Right ventricle myocardium superior (tissue), 1 donor: ENCODE measurements at regions of chr6 and their contacts with region 1.

Region 1: GRCh38 chr6:3751730-3752542 is 423 bp upstream of the PXDC1 start:
- DNase-seq: peak; percentile 93
- ATAC-seq: peak; percentile 82

Region 2: DNA sequence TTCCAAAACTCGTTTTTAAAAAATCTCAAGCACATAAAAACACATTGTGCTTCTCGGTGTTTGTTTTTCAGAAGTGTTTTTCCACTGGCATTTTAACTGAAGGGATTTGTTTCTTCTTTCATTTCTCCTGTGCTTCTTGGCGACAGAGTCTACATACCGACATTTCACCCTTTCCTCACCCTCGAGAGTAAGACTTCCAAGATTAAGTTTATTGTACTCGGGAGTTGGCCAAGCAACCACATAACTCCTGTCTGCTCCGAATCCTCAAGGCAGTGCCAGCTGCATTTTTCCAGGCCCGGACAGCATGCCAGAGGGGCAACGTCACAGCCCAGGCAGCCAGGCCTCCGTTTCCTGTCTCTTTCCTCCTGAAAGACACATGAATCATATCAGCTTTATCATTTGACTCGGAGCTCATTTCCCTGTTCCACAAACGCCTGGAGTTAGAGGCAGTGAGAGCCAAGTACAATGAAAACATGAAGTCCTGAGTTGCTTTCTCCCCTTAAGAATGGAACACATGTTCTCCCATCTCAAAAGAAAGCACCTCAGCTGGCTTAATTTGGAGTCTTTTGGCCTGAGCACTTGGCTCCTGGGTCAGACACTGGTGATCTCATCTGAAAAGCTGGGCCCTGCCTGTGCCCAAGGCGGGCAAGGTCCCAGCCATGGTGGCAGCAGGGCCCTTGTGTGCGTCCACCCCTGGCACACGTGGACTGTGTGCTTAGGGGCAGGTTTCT is 74.1 kb after region 1 on chr6:
- intact Hi-C with region 1: loop called (anchors 5 kb)
- DNase-seq: peak; percentile 91
- ATAC-seq: peak; percentile 94

Region 3: GRCh38 chr6:3887150-3887700 is 135.3 kb after region 1 on chr6:
- intact Hi-C with region 1: loop called (anchors 5 kb)
- DNase-seq: no peak
- ATAC-seq: peak; percentile 25